ENCODE measurements at regions of chr17 and their contacts with region 1.

Region 1: GRCh38 chr17:61524313-61524712 is 66.7 kb downstream of the NACA2 start:
- DNase-seq: no peak
- ATAC-seq: no peak
- H3K4me3 ChIP-seq: no peak overlapping the region
- H3K27ac ChIP-seq: no peak overlapping the region
- H3K4me1 ChIP-seq: peaks cover 0 to 2% of the 10 kb centered on the region in 2 donors
- H3K27me3 ChIP-seq: no peaks in the 10 kb centered on the region

Region 2: DNA sequence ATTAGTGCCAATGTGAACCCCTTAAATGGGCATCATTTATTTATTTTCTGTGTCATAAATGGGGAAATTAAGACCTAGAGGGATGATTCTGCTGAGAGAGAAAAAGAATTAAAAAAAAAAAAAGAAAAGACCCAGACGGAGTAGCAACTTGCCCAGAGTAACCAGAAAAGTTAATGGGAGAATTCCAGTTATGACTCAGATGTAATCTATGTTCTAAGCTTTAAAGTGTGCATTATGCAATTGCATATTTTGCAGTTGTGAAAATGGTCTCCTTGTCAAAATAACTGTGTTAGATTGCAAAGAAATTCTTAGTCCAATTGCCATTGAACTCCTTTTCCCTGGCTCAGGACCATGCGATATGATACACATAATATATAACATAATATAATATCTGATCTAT is 163.2 kb before region 1 on chr17:
- intact Hi-C with region 1: no loop called
- DNase-seq: no peak
- ATAC-seq: no peak
- H3K4me3 ChIP-seq: no peak overlapping the region
- H3K27ac ChIP-seq: no peak overlapping the region
- H3K4me1 ChIP-seq: peaks cover 0 to 2% of the 10 kb centered on the region in 2 donors
- H3K27me3 ChIP-seq: no peaks in the 10 kb centered on the region

Region 3: DNA sequence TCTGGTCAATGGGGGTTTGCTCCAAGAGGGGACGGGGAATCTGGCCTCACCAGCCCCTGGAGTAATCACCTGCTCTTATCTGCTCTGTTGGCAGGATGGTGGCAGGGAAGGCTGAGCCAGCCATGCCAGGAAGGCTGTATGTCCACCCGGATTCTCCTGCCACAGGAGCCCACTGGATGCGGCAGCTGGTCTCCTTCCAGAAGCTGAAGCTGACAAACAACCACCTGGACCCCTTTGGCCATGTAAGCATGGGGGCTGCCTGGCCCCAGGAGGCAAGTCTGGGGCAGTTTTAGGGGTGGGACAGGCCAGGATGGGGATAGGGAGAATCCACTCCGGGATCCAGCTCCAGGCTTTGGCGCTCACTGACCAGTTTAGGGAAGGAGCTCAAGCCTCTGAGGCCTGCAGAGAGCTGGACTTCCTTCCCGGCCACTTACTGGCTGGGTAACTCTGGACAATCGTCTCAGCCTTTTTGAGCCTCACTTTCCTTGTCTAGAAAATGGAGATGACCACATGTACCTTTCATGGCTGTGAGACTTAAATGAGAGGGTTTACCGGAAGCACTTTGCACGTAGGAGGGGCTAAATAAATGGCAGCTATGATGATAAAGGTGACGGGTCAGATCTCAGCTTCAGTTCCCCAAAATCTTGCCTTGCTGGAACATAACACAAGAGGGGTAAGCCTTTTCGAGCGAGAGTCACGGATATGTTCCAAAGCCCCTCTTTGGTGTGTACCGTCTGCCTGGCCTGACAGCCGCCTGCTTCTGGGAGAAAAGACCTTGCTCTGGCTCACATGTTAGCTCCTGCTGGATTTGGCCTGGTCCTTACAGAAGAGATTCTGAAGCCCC is 56.7 kb before region 1 on chr17:
- intact Hi-C with region 1: loop called in 1 of 2 experiments (anchors 10 kb)
- DNase-seq: peak; percentile 71 to 81
- ATAC-seq: no peak
- H3K4me3 ChIP-seq: no peak overlapping the region
- H3K27ac ChIP-seq: no peak overlapping the region
- H3K4me1 ChIP-seq: no peaks in the 10 kb centered on the region
- H3K27me3 ChIP-seq: no peaks in the 10 kb centered on the region